ENCODE measurements at regions of chr10 and their contacts with region 1.

Region 1: GRCh38 chr10:87659571-87660483 is at the start of gene PAPSS2:
- DNase-seq: peak; percentile 68

Region 2: GRCh38 chr10:87771871-87772500 is 112.2 kb after region 1 on chr10:
- in situ Hi-C with region 1: loop called (anchors 25 kb)
- DNase-seq: peak; percentile 57

Measured in ACHN (cell line).